Activated B cell treated with CpG ODN at 0.5 μM for 24 hours (primary cell): ENCODE measurements at regions of chr5 and their contacts with region 1.

Region 1: DNA sequence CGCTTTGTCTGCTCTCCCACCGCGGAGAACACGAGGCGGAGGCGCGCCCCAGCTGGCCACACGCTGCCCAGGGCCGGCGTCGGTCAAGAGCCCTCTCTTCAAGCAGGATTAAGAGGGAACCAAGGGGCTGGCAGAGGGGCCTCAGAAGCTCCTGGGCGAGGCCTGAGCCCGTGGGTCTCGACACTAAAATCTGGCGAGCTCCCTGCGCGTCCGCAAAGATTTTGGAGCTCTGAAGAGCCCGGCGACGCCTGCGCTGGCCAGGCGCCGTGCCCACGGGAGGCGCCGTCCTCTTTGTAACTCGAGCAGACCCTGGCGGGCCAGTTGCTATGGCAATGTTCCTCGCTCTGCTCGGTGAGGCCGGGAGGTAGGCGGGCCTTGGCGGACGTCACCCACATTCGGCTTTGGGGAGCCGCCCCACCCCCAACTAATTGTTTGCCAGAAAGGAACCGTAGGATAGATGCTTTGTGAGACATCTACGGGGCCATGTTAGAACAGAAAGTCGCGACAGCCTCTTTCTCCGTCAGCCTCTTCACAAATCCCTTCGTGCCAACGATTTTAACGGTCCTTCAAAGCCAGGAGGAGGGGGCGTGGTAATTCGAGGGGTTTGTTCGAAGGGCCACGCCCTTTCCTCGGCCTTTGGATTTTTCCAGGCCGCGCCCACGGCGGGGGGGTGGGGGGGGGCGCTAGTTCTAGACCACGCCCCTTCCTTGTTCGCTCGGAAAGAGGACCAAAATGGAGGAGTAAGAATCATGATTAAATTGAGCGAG is 714 bp upstream of the CNOT8 start:
- DNase-seq: peak; percentile 75
- ATAC-seq: peak; percentile 49
- H3K4me3 Mint-ChIP-seq: peak overlapping the region; percentile 91
- H3K27ac Mint-ChIP-seq: peak overlapping the region; percentile 97
- H3K4me1 Mint-ChIP-seq: peaks cover 42% of the 10 kb centered on the region
- H3K27me3 Mint-ChIP-seq: no peaks in the 10 kb centered on the region
- CTCF ChIP-seq: no peak

Region 2: GRCh38 chr5:154038707-154039457 is 818.8 kb before region 1 on chr5 and contains the starts of genes FAM114A2 and MFAP3:
- CTCF ChIA-PET with region 1: no interaction called
- POLR2A ChIA-PET with region 1: interaction called, 7 read pairs
- intact Hi-C with region 1: loop called (anchors 1 kb)
- DNase-seq: peak; percentile 77
- ATAC-seq: peak; percentile 98
- H3K4me3 Mint-ChIP-seq: peak within 1 kb of the TSS; percentile 97
- H3K27ac Mint-ChIP-seq: peak within 1 kb of the TSS; percentile 96
- H3K4me1 Mint-ChIP-seq: peaks cover 45% of the 10 kb centered on the region
- H3K27me3 Mint-ChIP-seq: no peaks in the 10 kb centered on the region
- CTCF ChIP-seq: no peak
- total RNA-seq, gene FAM114A2: 27.4 and 30.5 TPM in 2 replicates
- total RNA-seq, gene MFAP3: 18.4 and 20.8 TPM in 2 replicates

Region 3: DNA sequence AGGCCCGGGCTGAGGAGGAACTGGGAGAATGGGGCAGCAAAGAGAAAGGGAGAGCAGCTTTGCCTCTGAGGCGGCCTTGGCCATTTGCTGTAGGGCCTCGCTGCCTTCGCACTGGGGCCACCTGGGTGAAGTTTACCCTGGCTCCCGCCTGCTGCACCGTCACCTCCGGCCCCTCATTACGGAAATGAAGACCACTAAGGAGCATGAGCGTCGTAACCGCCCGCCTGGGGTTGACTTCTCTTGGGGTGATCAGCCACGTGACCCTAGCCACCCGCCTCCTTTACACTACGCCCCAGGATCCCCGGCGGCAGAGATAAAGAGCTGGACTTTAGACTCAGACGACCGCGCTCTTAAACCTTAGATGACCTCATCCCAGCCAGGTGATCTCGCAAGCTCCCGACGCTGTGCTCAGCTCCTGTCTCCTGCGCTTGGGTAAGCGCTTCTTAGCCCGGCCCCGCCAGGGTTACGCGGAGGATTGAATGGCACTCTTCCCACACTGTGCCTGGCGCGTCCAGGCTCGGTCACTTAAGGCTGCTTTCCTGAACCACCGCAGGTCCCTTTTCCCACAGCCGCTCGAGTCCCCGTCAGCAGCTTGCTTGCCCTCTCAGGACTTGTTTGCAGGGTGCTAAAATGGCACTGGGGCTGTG is 210.5 kb before region 1 on chr5:
- CTCF ChIA-PET with region 1: interaction called, 8 read pairs
- POLR2A ChIA-PET with region 1: no interaction called
- intact Hi-C with region 1: loop called (anchors 2 kb)
- DNase-seq: no peak
- ATAC-seq: peak; percentile 58
- H3K4me3 Mint-ChIP-seq: peak overlapping the region; percentile 87
- H3K27ac Mint-ChIP-seq: no peak overlapping the region
- H3K4me1 Mint-ChIP-seq: peaks cover 16% of the 10 kb centered on the region
- H3K27me3 Mint-ChIP-seq: peaks cover 12% of the 10 kb centered on the region
- CTCF ChIP-seq: no peak

Region 4: DNA sequence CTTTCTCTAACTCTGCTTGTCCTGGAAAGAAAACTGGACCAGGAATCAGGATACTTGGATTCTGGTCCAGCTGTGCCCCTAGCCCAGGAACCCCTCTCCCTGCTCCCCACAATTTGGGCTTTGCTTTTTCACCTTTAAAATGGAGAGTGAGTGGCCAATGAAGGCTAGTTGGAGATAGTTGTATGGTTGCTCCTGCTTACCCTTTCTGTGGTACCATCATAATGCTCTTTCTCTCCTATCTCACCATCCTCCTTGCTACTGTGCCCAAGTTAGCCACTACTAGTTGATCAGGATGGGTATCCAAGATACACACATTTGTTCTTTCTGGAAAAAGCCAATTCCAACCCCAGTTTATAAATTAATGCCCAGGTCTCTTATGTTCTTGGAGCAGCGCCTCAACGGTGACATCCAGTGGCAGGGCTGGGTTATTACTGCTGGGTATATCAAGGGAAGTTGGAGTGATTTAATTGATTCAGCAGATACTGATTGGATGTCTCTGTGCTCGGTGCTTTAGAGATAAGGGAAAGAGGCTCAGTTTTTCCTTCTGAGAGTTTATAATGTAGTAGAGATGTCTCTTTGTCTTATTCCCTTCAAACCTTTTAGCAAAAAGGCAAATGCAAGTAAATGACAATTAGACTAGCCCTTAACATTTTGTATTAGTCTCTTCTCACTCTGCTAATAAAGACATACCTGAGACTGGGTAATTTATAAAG is 45.9 kb before region 1 on chr5:
- CTCF ChIA-PET with region 1: no interaction called
- POLR2A ChIA-PET with region 1: no interaction called
- intact Hi-C with region 1: loop called (anchors 1 kb)
- DNase-seq: peak; percentile 32
- ATAC-seq: peak; percentile 88
- H3K4me3 Mint-ChIP-seq: no peak overlapping the region
- H3K27ac Mint-ChIP-seq: no peak overlapping the region
- H3K4me1 Mint-ChIP-seq: peaks cover 26% of the 10 kb centered on the region
- H3K27me3 Mint-ChIP-seq: no peaks in the 10 kb centered on the region
- CTCF ChIP-seq: peak; percentile 95

Region 5: GRCh38 chr5:154829589-154830218 is 28.0 kb before region 1 on chr5:
- CTCF ChIA-PET with region 1: no interaction called
- POLR2A ChIA-PET with region 1: no interaction called
- intact Hi-C with region 1: no loop called
- DNase-seq: no peak
- ATAC-seq: no peak
- H3K4me3 Mint-ChIP-seq: no peak overlapping the region
- H3K27ac Mint-ChIP-seq: no peak overlapping the region
- H3K4me1 Mint-ChIP-seq: peaks cover 13% of the 10 kb centered on the region
- H3K27me3 Mint-ChIP-seq: no peaks in the 10 kb centered on the region
- CTCF ChIP-seq: no peak

Region 6: GRCh38 chr5:156402387-156402921 is 1544.7 kb after region 1 on chr5:
- CTCF ChIA-PET with region 1: no interaction called
- POLR2A ChIA-PET with region 1: no interaction called
- intact Hi-C with region 1: loop called (anchors 5 kb)
- DNase-seq: peak; percentile 52
- ATAC-seq: peak; percentile 85
- H3K4me3 Mint-ChIP-seq: peak overlapping the region; percentile 66
- H3K27ac Mint-ChIP-seq: peak overlapping the region; percentile 88
- H3K4me1 Mint-ChIP-seq: peaks cover 18% of the 10 kb centered on the region
- H3K27me3 Mint-ChIP-seq: no peaks in the 10 kb centered on the region
- CTCF ChIP-seq: no peak